K562 (cell line): ENCODE measurements at regions of chr1 and their contacts with region 1.

Region 1: GRCh38 chr1:10045480-10046355 is 13.0 kb downstream of the UBE4B start:
- DNase-seq: peak; percentile 49 to 72 (median 52)
- ATAC-seq: peak; percentile 88
- H3K4me3 ChIP-seq: no peak overlapping the region
- H3K27ac ChIP-seq: peak overlapping the region; percentile 33; the same call in 2 of the 3 replicates
- H3K4me1 ChIP-seq: peaks cover 10 to 26% of the 10 kb centered on the region in 2 experiments; a peak in 4 of 5 replicates
- H3K27me3 ChIP-seq: no peaks in the 10 kb centered on the region
- CTCF ChIP-seq: no peak
- EP300 ChIP-seq: no peak; the same call in 1 of the 2 replicates
- POLR2A ChIP-seq: no peak; the same call in 1 of the 2 replicates
- RAD21 ChIP-seq: no peak

Region 2: GRCh38 chr1:10032590-10033358 is 12.9 kb before region 1 on chr1 and contains the start of gene UBE4B:
- CTCF ChIA-PET with region 1: no interaction called
- POLR2A ChIA-PET with region 1: interaction called, 31 read pairs
- in situ Hi-C with region 1: no loop called
- intact Hi-C with region 1: no loop called
- DNase-seq: peak; percentile 98 to 99 (median 99)
- ATAC-seq: peak; percentile 93
- H3K4me3 ChIP-seq: peak within 1 kb of the TSS; percentile 62
- H3K27ac ChIP-seq: peak within 1 kb of the TSS; percentile 97
- H3K4me1 ChIP-seq: peaks cover 3 to 14% of the 10 kb centered on the region in 2 experiments; a peak in 2 of 5 replicates
- H3K27me3 ChIP-seq: no peaks in the 10 kb centered on the region
- CTCF ChIP-seq: peak; percentile 91 to 98 (median 95)
- EP300 ChIP-seq: peak; percentile 53; the same call in 1 of the 2 replicates
- POLR2A ChIP-seq: peak; percentile 89
- RAD21 ChIP-seq: peak; percentile 81 to 84
- polyA plus RNA-seq, gene UBE4B: 11.7 to 24.9 TPM

Region 3: DNA sequence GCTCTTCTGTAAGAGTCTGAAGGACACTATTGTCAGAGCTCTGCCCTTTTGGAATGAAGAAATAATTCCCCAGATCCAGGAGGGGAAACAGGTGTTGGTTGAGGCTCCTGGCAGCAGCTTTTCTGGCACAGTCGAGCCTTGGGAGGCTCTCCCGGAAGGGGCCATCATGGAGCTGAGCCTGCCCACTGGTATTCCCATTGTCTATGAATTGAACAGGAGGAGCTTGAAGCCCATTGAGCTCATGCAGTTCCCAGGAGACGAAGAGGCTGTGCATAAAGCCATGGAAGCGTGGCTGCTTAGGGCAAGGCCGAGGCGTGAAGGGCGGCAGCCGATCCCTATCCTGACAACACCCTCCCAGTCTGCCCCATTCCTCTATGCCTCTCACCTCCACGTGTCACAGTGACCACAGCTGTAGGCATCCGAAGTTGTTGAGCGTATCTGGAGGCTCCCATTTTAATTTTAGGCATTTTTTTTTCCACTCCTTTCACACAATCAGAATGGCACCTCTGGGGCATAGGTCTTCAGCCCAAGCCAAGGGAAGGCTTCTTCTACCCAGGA is 13.7 kb after region 1 on chr1:
- CTCF ChIA-PET with region 1: no interaction called
- POLR2A ChIA-PET with region 1: interaction called, 33 read pairs
- in situ Hi-C with region 1: no loop called
- intact Hi-C with region 1: no loop called
- DNase-seq: no peak
- ATAC-seq: no peak
- H3K4me3 ChIP-seq: no peak overlapping the region
- H3K27ac ChIP-seq: no peak overlapping the region
- H3K4me1 ChIP-seq: peaks cover 8 to 12% of the 10 kb centered on the region in 2 experiments; a peak in 4 of 5 replicates
- H3K27me3 ChIP-seq: no peaks in the 10 kb centered on the region
- CTCF ChIP-seq: no peak
- EP300 ChIP-seq: no peak
- POLR2A ChIP-seq: no peak
- RAD21 ChIP-seq: no peak

Region 4: DNA sequence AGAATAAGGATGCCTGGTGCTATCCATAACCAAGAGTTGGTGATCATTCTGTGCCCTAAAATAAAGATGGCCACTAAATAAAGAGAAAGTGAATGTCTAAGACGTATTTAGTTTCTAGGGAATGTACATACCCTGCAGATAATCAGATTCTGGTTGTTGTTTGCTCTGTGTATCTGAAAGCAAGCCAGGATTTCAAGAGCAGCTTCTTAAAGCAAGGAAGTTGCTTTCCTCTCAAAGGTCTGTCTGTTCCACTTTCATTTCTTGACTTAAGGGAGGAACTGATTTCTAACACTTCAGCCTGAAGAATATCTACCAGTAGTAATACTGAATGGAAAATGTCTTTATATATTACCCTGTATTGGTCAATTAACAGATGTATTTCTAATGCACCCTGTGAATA is 253.4 kb after region 1 on chr1:
- CTCF ChIA-PET with region 1: no interaction called
- POLR2A ChIA-PET with region 1: no interaction called
- in situ Hi-C with region 1: no loop called
- intact Hi-C with region 1: no loop called
- DNase-seq: no peak
- ATAC-seq: no peak
- H3K4me3 ChIP-seq: no peak overlapping the region
- H3K27ac ChIP-seq: no peak overlapping the region
- H3K4me1 ChIP-seq: no peaks in the 10 kb centered on the region
- H3K27me3 ChIP-seq: no peaks in the 10 kb centered on the region
- CTCF ChIP-seq: no peak
- EP300 ChIP-seq: no peak
- POLR2A ChIP-seq: no peak
- RAD21 ChIP-seq: no peak